Heart left ventricle (tissue), 16 donors: ENCODE measurements at regions of chr10 and their contacts with region 1.

Region 1: GRCh38 chr10:72834183-72834825 is 59.2 kb upstream of the OIT3 start:
- DNase-seq: peak in 3 of 5 donors; percentile 27 to 50 (median 43)
- ATAC-seq: peak in 3 of 4 donors; percentile 63 to 85 (median 83)
- H3K4me3 ChIP-seq: no peak overlapping the region
- H3K27ac ChIP-seq: no peak overlapping the region
- H3K4me1 ChIP-seq: peaks cover 0 to 40% (median 11%) of the 10 kb centered on the region in 12 donors
- H3K27me3 ChIP-seq: no peaks in the 10 kb centered on the region
- CTCF ChIP-seq: peak; percentile 45 to 80 (median 70)
- POLR2A ChIP-seq: no peak

Region 2: DNA sequence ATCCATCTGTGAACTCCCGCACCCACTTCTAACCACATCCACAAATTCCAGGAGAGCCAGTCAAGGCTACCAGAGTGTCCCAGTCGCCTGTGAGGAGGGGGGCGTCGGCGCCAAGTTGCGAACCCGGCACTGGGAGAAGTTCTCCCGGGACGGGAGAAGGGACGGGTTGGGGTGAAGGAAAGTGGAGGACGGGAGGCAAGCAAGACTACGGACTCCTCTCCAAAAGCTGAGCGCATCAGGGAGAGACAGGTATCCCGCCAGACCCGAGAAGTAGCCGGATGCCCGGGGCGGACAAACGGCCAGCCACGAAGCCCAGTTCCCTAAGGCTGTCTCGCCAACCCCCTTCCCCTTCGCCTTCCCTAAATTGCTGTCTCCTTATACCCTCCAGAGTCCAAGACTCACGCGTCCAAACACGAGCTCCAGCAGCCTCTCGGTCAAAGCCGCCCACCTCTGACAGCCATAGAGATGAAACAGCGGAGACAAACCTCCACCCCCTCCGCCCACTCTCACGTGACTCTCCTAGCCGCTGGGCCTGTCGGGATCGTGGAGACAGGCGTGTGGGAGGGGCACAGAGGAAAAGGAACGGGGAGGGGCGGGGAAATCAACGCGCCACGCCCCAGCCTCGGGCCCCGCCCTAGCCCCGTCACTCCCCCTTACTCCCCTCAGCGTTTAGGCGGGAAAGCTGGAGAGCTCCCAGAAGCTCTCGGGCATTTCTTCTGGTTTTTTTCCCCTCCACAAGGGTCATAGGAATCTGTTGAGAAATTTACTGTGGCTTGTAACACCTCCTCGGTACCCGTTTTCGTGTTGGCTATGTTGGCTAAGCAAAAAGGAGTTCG is 208.5 kb before region 1 on chr10 and contains the start of gene MICU1:
- intact Hi-C with region 1: loop called in 3 of 10 experiments (anchors 5 to 10 kb)
- DNase-seq: peak; percentile 95 to 97 (median 96)
- ATAC-seq: peak; percentile 100
- H3K4me3 ChIP-seq: peak within 1 kb of the TSS; percentile 51 to 98 (median 82)
- H3K27ac ChIP-seq: peak within 1 kb of the TSS in 11 of 12 donors; percentile 70 to 91 (median 82)
- H3K4me1 ChIP-seq: peaks cover 0 to 20% (median 8%) of the 10 kb centered on the region in 12 donors
- H3K27me3 ChIP-seq: no peaks in the 10 kb centered on the region
- CTCF ChIP-seq: no peak
- POLR2A ChIP-seq: peak in 1 of 2 donors; percentile 86
- total RNA-seq, gene MICU1: 38.2 to 54.2 (median 43.6) TPM

Region 3: DNA sequence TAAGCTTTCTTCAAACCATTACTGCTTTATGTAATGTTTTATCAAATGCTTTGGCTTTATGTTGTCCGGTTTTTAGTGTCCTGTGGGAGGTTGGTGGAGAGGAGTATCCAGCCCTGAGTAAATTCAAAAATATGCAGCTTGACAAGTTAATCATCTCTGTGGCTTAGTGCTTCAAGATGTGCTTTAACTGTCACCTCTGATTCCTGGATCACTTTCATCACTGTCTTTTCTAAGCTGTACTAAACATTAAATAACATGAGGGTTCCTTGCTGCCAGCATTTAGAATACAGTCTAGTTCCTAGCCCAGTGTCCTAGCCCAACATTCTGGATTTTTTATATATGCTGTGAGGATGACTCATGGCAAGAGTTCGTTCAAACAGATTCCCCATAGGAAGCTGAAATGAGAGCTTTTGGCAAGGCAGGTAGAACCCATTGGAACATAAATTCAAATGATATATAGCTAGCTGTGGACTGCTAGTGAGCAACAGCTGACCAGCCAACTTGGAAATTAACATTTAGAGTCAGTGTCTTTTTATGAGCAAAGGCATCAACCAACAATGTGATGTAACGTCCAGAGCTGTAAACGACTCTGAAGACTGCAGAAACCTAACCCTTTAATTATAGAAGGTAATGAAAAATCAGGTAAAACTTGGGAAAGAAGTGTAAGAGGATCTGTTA is 21.4 kb before region 1 on chr10:
- intact Hi-C with region 1: no loop called
- DNase-seq: no peak
- ATAC-seq: no peak
- H3K4me3 ChIP-seq: no peak overlapping the region
- H3K27ac ChIP-seq: no peak overlapping the region
- H3K4me1 ChIP-seq: peaks cover 0 to 25% (median 10%) of the 10 kb centered on the region in 12 donors
- H3K27me3 ChIP-seq: no peaks in the 10 kb centered on the region
- CTCF ChIP-seq: no peak
- POLR2A ChIP-seq: no peak